Heart right ventricle (tissue), 16 donors: ENCODE measurements at regions of chr12 and their contacts with region 1.

Region 1: DNA sequence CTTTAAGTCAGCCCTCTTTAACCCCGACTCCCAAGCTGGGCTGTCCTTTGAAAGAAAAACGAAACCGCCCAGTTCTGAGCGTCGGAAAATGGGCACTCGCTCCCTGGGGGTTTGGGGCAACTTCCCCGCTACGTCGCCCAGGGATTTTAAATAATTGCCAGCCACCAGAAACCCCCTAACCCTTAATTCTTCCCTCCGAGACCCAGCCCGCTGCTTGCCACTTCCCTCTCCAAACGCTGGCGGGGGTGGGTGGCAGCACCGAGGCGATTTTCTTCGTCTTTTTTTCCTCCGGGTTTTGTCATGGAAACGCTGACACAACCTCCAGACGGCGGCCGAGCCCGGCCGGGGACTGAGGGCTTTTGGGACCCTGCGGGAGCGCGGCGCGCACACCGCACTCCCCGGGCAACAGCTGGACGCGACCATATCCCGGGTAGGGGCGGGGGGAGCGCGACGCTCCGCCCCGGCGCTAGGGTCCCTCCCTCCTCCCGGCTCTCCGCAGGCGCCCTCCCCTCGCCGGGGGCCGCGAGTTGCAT is at the start of gene CHST11:
- DNase-seq: peak; percentile 87
- ATAC-seq: peak; percentile 93 to 96 (median 94)
- H3K4me3 ChIP-seq: peak within 1 kb of the TSS; percentile 49 to 99 (median 93)
- H3K27ac ChIP-seq: peak within 1 kb of the TSS in 9 of 10 donors; percentile 59 to 95 (median 82)
- H3K4me1 ChIP-seq: peaks cover 0 to 36% (median 30%) of the 10 kb centered on the region in 9 donors
- H3K27me3 ChIP-seq: no peaks in the 10 kb centered on the region
- CTCF ChIP-seq: peak in 5 of 9 donors; percentile 21 to 61 (median 47)
- total RNA-seq, gene CHST11: 2.7 to 12.7 (median 4.5) TPM

Region 2: DNA sequence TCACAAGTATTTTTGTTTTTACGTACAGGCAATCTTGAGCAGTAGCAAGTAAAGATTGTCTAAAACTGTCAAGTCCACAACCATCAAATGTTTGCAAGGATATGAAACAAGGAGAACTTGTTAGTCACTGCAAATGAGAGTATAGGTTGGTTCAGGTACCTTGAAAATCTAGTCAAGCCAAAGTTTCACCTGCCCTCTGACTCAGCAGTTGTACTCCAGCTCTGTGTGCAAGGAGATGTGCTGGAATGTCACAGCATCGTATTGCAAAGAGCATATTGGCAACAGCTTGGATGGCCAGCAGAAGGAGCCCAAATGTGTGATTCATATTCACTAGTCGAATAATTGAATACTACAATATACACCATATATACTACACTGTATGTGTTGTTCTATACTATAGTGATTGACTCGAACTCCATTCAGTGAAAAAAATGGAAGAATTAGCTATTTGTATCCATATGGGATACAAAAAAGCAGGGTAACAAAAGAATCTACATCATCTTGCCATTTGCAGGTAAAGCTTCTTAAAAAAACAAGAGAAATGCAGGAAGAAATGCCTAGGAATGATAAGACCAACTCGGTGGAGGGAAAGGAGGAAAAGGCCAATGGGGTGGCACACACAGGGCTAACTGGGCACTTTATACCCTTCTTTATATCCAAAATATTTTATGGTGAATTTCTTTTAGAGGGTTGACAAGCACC is 109.0 kb before region 1 on chr12:
- intact Hi-C with region 1: no loop called
- DNase-seq: no peak
- ATAC-seq: no peak
- H3K4me3 ChIP-seq: no peak overlapping the region
- H3K27ac ChIP-seq: no peak overlapping the region
- H3K4me1 ChIP-seq: peaks cover 0 to 28% (median 9%) of the 10 kb centered on the region in 9 donors
- H3K27me3 ChIP-seq: no peaks in the 10 kb centered on the region
- CTCF ChIP-seq: no peak

Region 3: DNA sequence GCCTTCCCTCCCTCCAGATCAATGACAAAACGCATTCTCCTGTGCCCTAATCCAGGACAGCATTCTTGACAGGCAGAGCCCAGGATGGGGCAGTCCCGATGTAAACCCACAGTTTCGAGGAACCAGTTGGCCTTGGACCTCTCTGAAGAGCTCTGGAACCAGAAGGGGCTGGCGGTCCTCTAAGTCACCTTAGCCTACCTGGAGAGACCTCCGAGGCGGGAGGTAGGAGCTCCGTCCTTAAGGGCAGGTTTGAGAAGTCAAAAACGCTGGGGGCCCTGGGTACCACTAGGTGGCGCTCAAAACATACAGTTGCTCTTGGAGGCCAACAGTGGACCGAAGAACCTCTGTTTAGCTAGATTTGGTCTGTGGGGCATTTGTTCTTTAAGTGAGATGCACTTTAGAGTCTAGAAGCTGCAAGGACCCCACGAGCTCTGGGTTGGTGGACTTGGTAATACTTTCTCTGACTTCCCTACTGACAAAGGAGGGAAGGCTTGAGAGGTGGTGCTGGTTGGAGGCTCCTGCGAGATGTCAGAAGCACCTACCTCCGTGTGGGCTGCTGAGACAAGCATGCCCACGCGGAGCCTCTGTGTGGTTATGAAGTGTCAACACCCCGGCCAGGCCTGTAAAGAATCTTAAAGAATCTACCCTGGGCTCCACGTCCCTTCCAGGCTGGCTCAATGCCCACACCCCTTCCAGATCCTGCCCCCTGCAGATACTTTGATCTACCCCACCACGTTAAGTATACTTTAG is 74.6 kb before region 1 on chr12:
- intact Hi-C with region 1: loop called in 1 of 10 experiments (anchors 5 kb)
- DNase-seq: peak; percentile 73 to 80
- ATAC-seq: peak; percentile 72 to 92 (median 88)
- H3K4me3 ChIP-seq: no peak overlapping the region
- H3K27ac ChIP-seq: no peak overlapping the region
- H3K4me1 ChIP-seq: peaks cover 0 to 10% (median 0%) of the 10 kb centered on the region in 9 donors
- H3K27me3 ChIP-seq: peaks cover 0 to 4% (median 0%) of the 10 kb centered on the region in 7 donors
- CTCF ChIP-seq: peak; percentile 91 to 99 (median 96)

Region 4: DNA sequence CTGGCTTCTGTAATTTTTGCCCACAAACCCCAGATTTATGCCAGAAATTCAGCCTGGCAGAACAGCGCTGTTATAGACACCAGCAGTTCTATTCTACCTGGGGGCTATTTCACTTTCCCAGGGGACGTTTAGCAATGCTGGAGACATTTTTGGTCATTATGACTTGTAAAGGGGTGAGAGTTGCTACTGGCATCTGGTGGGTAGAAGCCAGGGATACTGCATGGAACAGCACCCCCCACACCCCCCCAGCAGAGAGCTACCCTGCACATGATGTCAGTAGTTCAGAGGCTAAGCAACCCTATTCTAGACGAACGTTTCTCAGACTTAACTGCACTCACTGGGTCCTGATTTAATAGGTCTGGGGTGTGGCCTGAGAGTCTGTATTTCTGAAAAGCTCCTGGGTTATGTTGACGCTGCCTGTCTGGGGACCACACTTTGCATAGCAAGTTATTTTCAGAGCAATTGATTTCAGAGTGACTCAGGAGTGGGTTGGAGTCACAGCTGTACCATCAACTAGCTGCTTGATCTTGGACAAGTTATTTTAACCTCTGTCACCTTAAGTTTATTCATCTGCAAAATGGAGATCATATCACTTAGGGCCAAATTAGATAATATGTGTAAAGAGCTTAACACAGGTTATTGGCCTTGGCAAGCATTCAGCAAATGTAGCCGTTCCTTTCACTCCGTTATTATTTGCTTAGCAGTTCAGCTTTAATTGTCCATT is 48.8 kb after region 1 on chr12:
- intact Hi-C with region 1: loop called in 1 of 10 experiments (anchors 5 kb)
- DNase-seq: no peak
- ATAC-seq: peak in 1 of 8 donors; percentile 37
- H3K4me3 ChIP-seq: no peak overlapping the region
- H3K27ac ChIP-seq: no peak overlapping the region
- H3K4me1 ChIP-seq: peaks cover 0 to 60% (median 29%) of the 10 kb centered on the region in 9 donors
- H3K27me3 ChIP-seq: no peaks in the 10 kb centered on the region
- CTCF ChIP-seq: no peak

Region 5: GRCh38 chr12:104604070-104604994 is 147.8 kb after region 1 on chr12:
- intact Hi-C with region 1: loop called in 2 of 10 experiments (anchors 2 to 5 kb)
- DNase-seq: peak; percentile 34 to 70
- ATAC-seq: peak; percentile 86 to 96 (median 91)
- H3K4me3 ChIP-seq: no peak overlapping the region
- H3K27ac ChIP-seq: peak overlapping the region in 9 of 10 donors; percentile 32 to 78 (median 58)
- H3K4me1 ChIP-seq: peaks cover 0 to 69% (median 25%) of the 10 kb centered on the region in 9 donors
- H3K27me3 ChIP-seq: no peaks in the 10 kb centered on the region
- CTCF ChIP-seq: no peak

Region 6: DNA sequence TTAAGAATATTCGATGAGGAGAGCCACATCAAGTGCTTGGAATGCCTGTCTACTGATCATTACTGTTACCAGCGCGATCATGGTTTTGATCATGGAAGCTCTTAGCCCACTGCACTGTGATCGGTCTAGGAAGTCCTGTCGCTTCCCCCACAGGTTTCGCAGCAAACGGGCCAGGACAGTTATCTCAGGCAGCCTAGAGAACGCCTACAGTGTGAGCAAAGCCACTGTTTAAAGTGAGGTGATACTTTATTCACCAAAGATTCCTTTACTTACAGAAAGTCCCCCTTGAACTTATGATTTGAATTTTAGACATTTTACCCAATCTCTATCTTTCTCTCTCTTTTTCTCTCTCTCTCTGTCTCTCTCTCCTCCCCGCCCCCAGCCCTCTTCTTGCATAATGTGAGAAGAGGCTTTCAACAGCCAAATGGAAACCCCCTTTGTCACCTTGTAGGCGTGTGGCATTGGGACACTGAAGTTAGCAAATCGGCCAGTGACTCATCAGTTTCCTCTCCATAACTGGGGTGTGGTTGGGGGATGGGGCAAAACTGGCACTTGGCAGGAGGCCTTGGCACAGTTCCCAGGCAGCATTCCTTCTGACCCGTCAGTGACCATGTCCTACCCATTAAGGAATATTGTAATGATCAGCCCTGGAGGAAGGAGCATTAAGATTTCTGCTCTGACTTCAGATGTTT is 215.1 kb after region 1 on chr12:
- intact Hi-C with region 1: loop called in 5 of 10 experiments (anchors 5 to 10 kb)
- DNase-seq: peak; percentile 73 to 84
- ATAC-seq: peak; percentile 30 to 74 (median 56)
- H3K4me3 ChIP-seq: no peak overlapping the region
- H3K27ac ChIP-seq: peak overlapping the region; percentile 11 to 88 (median 63)
- H3K4me1 ChIP-seq: peaks cover 30 to 78% (median 65%) of the 10 kb centered on the region in 9 donors
- H3K27me3 ChIP-seq: no peaks in the 10 kb centered on the region
- CTCF ChIP-seq: no peak

Region 7: DNA sequence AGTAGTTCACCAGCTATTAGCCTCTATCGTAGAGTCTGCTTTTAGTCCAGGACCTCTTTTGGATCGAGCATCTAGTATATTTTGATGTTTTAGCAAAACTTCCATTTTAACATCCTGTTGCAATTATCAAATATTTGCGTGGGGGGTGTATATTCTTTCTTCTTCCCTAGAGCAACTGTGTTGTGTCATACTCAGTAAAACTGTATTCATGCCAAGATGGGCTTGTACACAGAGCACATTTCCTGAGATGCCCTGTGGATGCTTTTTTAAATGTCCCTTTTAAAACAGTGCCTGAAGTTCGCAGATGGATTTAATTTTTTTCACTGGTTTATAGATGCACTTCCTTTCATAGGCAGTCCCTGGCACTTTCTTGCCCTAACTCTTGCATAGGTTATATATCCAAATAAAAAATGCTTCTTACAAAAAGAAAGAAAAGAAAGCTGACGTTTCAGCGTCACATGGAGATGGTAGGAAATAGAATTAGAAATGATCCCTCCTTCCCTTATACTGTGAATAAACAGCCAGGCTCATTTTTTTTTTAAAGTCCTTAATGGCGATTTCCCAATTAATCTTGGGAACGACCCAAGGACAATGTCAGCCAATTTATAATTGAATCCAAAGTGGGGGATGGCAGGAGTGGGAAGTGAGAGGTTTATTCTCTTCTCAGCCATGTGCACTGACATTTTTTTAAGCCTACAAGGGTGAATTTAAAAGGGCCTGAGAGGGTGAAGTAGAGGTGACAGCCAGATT is 254.6 kb after region 1 on chr12:
- intact Hi-C with region 1: loop called in 1 of 10 experiments (anchors 10 kb)
- DNase-seq: no peak
- ATAC-seq: peak in 7 of 8 donors; percentile 41 to 72 (median 60)
- H3K4me3 ChIP-seq: no peak overlapping the region
- H3K27ac ChIP-seq: no peak overlapping the region
- H3K4me1 ChIP-seq: peaks cover 3 to 29% (median 15%) of the 10 kb centered on the region in 9 donors
- H3K27me3 ChIP-seq: no peaks in the 10 kb centered on the region
- CTCF ChIP-seq: no peak

Region 8: DNA sequence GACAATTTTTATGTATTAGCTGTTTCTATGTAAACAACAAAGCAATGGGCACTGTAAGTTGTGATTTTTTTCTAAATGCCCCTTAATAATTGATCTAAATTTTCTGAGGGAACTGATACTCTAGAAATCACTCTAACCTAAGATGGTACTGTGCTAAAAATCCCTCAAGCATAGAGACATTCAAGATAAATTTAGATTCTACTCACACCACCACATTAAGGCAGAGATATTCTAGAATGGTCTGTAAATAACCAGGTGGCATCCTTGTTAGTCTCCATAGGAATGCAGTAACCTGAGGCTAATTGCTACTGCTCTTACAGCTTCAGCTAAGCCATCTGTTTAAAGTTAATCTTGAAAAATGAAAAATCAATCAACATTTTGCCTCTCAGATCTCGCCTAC is 414.3 kb after region 1 on chr12:
- intact Hi-C with region 1: loop called in 2 of 10 experiments (anchors 5 to 10 kb)
- DNase-seq: no peak
- ATAC-seq: no peak
- H3K4me3 ChIP-seq: no peak overlapping the region
- H3K27ac ChIP-seq: no peak overlapping the region
- H3K4me1 ChIP-seq: peaks cover 0 to 9% (median 0%) of the 10 kb centered on the region in 9 donors
- H3K27me3 ChIP-seq: no peaks in the 10 kb centered on the region
- CTCF ChIP-seq: no peak